Aorta (tissue), 5 donors: ENCODE measurements at regions of chr14 and their contacts with region 1.

Region 1: DNA sequence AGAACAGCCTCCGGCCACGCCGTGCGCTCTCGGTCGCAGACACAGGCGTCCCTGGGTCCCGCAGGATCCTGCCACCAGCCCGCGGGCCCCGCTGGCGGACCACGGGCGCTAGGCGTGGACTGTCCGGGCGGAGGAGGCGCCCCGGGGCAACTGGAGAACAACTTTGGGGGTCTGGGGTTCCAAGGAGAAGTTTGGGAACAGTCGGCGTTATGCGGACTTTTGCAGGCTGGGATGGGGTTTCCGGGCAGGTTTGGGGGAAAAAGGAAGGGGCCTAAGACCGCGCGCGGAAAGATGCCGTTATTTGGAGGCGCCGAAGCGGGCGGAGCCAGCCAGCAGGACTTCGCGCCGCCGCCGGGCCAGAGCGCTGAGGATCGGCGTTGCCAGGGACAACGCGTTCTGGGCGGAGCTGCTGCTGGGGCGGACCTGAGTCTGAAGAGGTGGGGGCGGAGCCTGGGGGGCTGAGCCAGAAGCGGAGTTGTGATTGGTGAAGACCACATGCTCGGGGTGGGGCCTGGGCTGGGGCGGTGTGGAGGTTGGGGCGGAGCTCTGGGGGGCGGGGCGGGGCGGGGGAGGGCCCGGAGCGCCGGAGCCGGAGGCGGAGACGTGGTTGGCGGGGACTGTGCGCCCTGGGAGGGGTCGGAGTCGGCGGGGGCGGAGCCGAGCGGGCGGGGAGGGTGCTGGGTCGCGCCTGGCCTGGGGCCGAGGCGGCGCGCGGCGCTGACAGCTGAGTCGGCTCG is at the start of gene CYP46A1:
- DNase-seq: peak; percentile 100
- ATAC-seq: peak; percentile 98
- H3K4me3 ChIP-seq: peak within 1 kb of the TSS; percentile 55 to 62
- H3K27ac ChIP-seq: peak within 1 kb of the TSS in 1 of 2 donors; percentile 64
- H3K4me1 ChIP-seq: no peaks in the 10 kb centered on the region
- H3K27me3 ChIP-seq: no peaks in the 10 kb centered on the region
- total RNA-seq, gene CYP46A1: 0.68 to 3.7 TPM

Region 2: DNA sequence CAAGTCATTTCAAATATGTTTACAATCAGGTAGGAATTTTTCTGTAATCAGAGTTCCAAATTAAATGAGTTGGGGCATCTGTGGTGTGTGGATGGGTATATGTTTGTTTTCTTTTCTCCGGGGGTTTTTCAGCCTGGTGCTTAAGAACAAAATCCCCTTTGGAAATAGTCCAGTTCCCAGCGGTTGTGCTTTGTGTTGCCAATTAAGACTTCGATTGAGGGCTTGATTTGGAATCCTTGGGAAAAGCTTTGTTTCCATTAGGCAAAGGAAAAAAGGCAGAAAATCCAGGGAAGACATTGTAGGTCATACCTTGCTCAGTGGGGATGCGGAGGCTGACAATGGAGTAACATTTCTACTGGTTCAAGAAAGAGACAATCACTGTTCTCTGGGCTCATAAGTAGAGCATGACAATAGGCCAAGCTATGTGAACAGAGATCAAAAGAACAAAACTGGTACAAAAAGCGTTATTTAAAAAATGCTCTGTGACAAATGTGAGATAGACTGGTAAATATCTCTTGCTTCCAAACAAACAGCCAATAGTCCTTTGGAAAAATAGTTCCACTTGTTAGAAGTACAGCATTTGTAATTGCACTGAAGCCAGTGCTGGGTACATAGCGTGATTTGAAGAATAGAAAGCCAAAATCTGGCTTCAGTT is 189.1 kb after region 1 on chr14:
- intact Hi-C with region 1: loop called in 1 of 2 experiments (anchors 5 kb)
- DNase-seq: no peak
- ATAC-seq: no peak
- H3K4me3 ChIP-seq: no peak overlapping the region
- H3K27ac ChIP-seq: no peak overlapping the region
- H3K4me1 ChIP-seq: no peaks in the 10 kb centered on the region
- H3K27me3 ChIP-seq: no peaks in the 10 kb centered on the region

Region 3: GRCh38 chr14:99884834-99885648 is 201.3 kb after region 1 on chr14:
- intact Hi-C with region 1: loop called (anchors 1 to 2 kb)
- DNase-seq: no peak
- ATAC-seq: peak; percentile 82
- H3K4me3 ChIP-seq: no peak overlapping the region
- H3K27ac ChIP-seq: no peak overlapping the region
- H3K4me1 ChIP-seq: no peaks in the 10 kb centered on the region
- H3K27me3 ChIP-seq: no peaks in the 10 kb centered on the region

Region 4: GRCh38 chr14:99982537-99983250 is 298.9 kb after region 1 on chr14:
- intact Hi-C with region 1: no loop called
- DNase-seq: no peak
- ATAC-seq: peak; percentile 92
- H3K4me3 ChIP-seq: peak overlapping the region in 1 of 2 donors; percentile 28
- H3K27ac ChIP-seq: no peak overlapping the region
- H3K4me1 ChIP-seq: no peaks in the 10 kb centered on the region
- H3K27me3 ChIP-seq: no peaks in the 10 kb centered on the region

Region 5: DNA sequence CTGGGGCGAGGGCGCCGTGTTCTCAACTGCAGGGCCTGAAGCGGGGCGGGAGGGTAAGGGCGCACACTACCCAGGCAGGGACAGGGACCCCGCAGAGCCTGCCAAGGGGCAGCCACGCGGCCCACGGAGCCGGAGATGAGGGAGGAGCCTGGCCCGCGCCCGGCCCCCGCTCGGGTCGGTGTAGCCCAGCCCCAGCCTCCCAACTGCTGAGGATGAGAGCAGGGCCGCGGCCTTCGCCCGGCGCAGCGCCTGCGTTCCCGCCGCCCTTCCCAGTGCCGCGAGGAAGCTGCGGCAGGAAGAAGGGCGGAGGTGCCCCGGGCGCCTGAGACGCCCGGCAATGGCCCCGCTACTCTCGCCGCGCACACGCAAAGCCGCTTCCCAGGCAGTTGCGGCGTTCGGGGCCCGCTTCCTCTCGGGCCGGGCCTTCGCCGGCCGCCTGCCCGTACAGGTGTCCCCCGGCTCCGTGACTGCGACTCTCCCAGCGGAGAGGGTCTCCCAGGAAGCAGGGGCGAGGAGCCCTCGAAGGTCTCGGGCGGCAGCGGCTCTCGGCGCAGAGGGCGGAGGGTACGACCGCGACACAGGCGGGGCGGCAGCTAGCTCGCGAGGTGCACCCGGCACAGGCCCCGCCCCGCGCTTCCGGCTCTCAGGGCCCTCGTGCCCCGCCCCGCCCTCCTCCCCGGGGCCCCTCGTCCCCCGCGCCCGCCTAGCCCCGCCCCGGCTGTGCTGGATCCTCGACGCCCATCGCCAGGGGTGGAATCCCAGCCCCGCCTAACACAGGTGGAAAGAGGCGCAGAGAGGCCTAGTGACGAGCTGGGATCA is 530.4 kb after region 1 on chr14:
- intact Hi-C with region 1: loop called in 1 of 2 experiments (anchors 10 kb)
- DNase-seq: peak; percentile 93 to 97
- ATAC-seq: peak; percentile 95
- H3K4me3 ChIP-seq: peak overlapping the region; percentile 31 to 87
- H3K27ac ChIP-seq: peak overlapping the region; percentile 60 to 83
- H3K4me1 ChIP-seq: no peaks in the 10 kb centered on the region
- H3K27me3 ChIP-seq: no peaks in the 10 kb centered on the region